PC-3 (cell line): ENCODE measurements at regions of chr18 and their contacts with region 1.

Region 1: GRCh38 chr18:35231052-35231451 is 9.8 kb upstream of the ZNF397 start:
- DNase-seq: peak; percentile 58
- ATAC-seq: peak; percentile 77
- H3K4me3 ChIP-seq: peak overlapping the region; percentile 40; the same call in 1 of the 2 replicates
- H3K27ac ChIP-seq: no peak overlapping the region
- H3K4me1 ChIP-seq: no peaks in the 10 kb centered on the region
- H3K27me3 ChIP-seq: no peaks in the 10 kb centered on the region
- CTCF ChIP-seq: peak; percentile 67

Region 2: DNA sequence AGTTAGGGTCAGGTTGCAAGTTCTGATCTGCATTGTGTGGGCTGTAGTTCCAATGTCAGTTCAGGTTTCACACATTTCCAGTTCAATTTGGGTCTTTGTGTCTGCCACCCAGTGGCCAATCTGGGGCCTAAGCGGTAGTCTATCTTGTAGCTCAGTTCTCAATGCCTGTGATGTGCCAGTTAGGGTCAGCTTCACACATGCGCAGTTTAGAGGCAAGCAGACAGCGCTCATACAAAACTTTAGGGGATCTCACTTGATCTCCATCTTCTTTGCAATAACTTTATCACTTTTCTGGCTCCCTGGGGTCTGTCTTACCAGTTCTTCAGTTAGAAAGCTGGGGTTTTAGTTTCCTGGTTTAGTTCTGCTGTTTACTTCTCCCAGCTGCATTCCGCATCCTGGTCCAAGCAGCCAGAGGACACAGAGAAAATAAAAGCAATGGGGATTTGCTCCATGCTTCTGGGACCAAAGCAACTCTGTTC is 124.1 kb after region 1 on chr18:
- CTCF ChIA-PET with region 1: no interaction called
- POLR2A ChIA-PET with region 1: no interaction called
- intact Hi-C with region 1: loop called (anchors 1 kb)
- DNase-seq: peak; percentile 62
- ATAC-seq: peak; percentile 97
- H3K4me3 ChIP-seq: peak overlapping the region; percentile 49; the same call in 1 of the 2 replicates
- H3K27ac ChIP-seq: no peak overlapping the region
- H3K4me1 ChIP-seq: no peaks in the 10 kb centered on the region
- H3K27me3 ChIP-seq: no peaks in the 10 kb centered on the region
- CTCF ChIP-seq: peak; percentile 56